Posterior vena cava (tissue), 2 donors: ENCODE measurements at regions of chr14 and their contacts with region 1.

Region 1: DNA sequence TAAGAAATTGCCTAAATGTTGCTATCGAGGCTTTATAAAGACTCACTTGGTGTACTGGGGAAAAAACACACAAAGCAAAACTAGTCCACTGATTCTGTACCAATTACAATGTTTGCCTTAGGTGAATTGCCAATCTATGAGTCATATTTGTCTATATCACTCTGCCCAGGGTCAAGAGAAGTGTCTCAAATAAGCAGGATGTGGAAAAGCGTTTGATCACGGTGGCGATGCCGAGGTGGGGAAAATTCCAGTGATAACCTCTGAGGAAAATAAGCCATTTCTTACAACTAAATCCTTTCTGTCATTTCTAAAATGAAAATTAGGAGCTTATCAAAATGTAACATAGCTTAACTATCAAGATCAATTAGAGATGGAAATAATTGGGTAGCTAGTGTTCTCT is 148.6 kb upstream of the DIO3 start:
- DNase-seq: no peak

Region 2: GRCh38 chr14:101379842-101380241 is 32.9 kb before region 1 on chr14:
- intact Hi-C with region 1: loop called in 1 of 2 experiments (anchors 2 kb)
- DNase-seq: no peak